ENCODE measurements at regions of chr10 and their contacts with region 1.

Region 1: DNA sequence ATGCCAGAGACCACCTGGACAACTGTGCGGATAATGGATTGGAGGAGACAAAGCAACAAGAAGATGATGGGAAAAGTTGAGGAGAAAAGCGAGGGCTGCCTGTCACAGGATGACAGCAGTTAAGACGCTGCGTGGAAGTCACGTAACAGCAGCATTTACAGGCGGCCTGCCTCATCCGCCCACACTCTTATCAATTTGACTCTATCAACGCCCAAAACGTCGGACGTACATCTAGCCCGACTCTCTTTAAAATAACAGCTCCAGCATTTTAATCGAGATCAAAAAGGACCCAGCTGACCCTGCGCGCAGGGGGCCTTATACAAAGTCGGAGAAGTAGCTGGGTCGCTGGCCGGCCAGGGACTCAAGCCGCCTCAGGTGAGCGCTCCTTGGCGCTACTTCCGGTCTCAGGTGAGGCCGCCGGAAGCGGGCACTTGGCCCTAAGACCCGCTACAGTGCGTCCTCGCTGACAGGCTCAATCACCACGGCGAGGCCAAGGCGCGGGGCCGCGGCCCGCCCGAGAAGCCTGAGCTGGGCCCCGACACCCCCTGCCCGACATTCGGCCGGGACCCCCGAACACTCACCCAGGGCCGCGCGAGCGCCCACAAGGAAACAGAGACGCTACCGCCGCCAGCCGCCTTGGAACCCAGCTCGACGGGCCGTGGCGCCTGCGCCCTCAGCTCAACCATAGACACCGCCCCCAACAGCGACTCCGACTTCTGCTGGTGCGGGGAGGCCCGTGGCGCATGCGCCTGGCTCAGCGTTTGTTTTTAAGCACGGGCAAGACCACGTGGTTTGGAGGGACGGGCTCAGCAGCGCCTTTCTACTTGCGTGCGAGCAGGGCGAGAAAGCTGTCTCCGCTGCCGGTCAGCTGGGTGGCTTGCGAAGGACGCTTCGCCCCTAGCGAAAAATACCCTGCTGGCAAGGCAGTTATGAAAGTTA is at the start of gene ERCC6:
- DNase-seq: peak; percentile 85 to 98 (median 95)
- ATAC-seq: peak; percentile 93 to 95 (median 95)
- H3K4me3 ChIP-seq: peak within 1 kb of the TSS; percentile 66 to 82
- H3K4me3 Mint-ChIP-seq: peak within 1 kb of the TSS; percentile 87 to 95 (median 94)
- H3K27ac ChIP-seq: peak within 1 kb of the TSS; percentile 76
- H3K27ac Mint-ChIP-seq: peak within 1 kb of the TSS; percentile 96
- H3K4me1 ChIP-seq: peaks cover 2 to 24% of the 10 kb centered on the region in 2 experiments
- H3K4me1 Mint-ChIP-seq: peaks cover 40 to 46% (median 45%) of the 10 kb centered on the region in 3 donors
- H3K27me3 ChIP-seq: peaks cover 0 to 6% of the 10 kb centered on the region in 2 experiments
- H3K27me3 Mint-ChIP-seq: peaks cover 18 to 21% of the 10 kb centered on the region in 2 donors
- total RNA-seq, gene ERCC6: 34.6 to 40.7 (median 39.1) TPM

Region 2: GRCh38 chr10:49518982-49519578 is 19.6 kb before region 1 on chr10:
- CTCF ChIA-PET with region 1: interaction called in 1 of 2 experiments, 11 read pairs
- POLR2A ChIA-PET with region 1: interaction called, 3 to 4 read pairs
- DNase-seq: peak in 13 of 35 experiments; percentile 8 to 67 (median 17)
- ATAC-seq: peak; percentile 57 to 68 (median 61)
- H3K4me3 ChIP-seq: no peak overlapping the region
- H3K4me3 Mint-ChIP-seq: no peak overlapping the region
- H3K27ac ChIP-seq: no peak overlapping the region
- H3K27ac Mint-ChIP-seq: no peak overlapping the region
- H3K4me1 ChIP-seq: no peaks in the 10 kb centered on the region
- H3K4me1 Mint-ChIP-seq: peaks cover 5 to 16% (median 11%) of the 10 kb centered on the region in 3 donors
- H3K27me3 ChIP-seq: no peaks in the 10 kb centered on the region
- H3K27me3 Mint-ChIP-seq: peaks cover 0 to 2% of the 10 kb centered on the region in 2 donors

Measured in T-cell (primary cell).